Endothelial cell of umbilical vein (primary cell): ENCODE measurements at regions of chr12 and their contacts with region 1.

Region 1: DNA sequence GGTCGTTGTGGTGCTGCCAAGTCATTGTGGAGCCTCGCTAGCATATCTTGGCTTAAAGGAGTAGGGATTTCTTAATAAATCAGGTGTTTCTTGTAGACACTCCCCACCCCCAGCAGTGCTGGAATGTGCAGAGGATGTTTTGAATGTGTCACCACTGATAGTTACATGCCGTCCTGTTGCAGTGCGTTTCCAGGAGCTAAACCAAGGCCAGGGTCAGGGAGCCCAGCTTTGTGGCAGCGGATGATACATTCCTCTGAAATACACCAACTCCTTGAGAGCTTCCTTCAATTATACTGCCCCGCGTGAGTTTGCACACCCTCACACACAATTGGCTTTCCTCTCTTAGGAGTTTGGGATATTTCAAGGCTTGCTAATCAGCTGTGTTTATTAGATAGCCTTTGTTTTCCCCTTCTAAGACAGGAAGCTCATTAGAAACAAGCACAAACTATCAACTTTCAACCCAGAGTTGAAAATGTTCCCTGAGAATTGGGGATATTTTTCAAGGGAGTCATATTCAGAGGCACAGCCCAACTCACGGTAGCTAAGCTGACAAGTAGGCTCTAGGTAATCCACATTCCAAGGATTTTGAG is 154.9 kb downstream of the C12orf75 start:
- DNase-seq: peak; percentile 99
- H3K4me3 ChIP-seq: no peak overlapping the region
- H3K27ac ChIP-seq: peak overlapping the region; percentile 74
- H3K4me1 ChIP-seq: peaks cover 100% of the 10 kb centered on the region
- H3K27me3 ChIP-seq: no peaks in the 10 kb centered on the region
- CTCF ChIP-seq: no peak
- POLR2A ChIP-seq: peak; percentile 90

Region 2: GRCh38 chr12:105445249-105446015 is 40.0 kb before region 1 on chr12:
- CTCF ChIA-PET with region 1: interaction called, 14 read pairs
- POLR2A ChIA-PET with region 1: interaction called, 16 read pairs
- dilution Hi-C with region 1: no loop called
- intact Hi-C with region 1: loop called (anchors 1 kb)
- DNase-seq: peak; percentile 98
- H3K4me3 ChIP-seq: no peak overlapping the region
- H3K27ac ChIP-seq: peak overlapping the region; percentile 98
- H3K4me1 ChIP-seq: peaks cover 29% of the 10 kb centered on the region
- H3K27me3 ChIP-seq: no peaks in the 10 kb centered on the region
- CTCF ChIP-seq: no peak
- POLR2A ChIP-seq: peak; percentile 86

Region 3: DNA sequence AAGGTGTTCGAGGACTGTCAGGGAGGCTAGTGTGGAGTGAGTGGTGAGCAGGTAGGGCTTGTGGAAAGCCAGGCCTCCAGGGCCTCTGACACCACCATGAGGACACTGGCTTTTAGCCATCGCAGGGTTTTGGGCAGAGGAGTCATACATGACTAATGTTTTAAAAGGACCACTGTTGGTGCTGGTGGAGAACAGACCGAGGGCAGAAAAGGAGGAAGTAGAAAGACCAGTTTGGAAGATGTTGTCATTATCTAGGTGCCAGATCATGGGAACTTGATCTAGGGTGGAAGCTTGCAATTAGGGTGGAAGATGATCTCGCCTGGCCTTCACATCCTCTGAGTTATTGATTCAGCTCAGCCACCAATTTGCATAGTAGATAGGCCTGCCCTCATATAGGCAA is 10.7 kb before region 1 on chr12:
- CTCF ChIA-PET with region 1: interaction called, 41 read pairs
- POLR2A ChIA-PET with region 1: interaction called, 14 read pairs
- dilution Hi-C with region 1: no loop called
- intact Hi-C with region 1: loop called (anchors 1 kb)
- DNase-seq: peak; percentile 62
- H3K4me3 ChIP-seq: no peak overlapping the region
- H3K27ac ChIP-seq: peak overlapping the region; percentile 4
- H3K4me1 ChIP-seq: peaks cover 67% of the 10 kb centered on the region
- H3K27me3 ChIP-seq: no peaks in the 10 kb centered on the region
- CTCF ChIP-seq: no peak
- POLR2A ChIP-seq: no peak

Region 4: GRCh38 chr12:105587237-105587636 is 101.8 kb after region 1 on chr12:
- CTCF ChIA-PET with region 1: no interaction called
- POLR2A ChIA-PET with region 1: no interaction called
- dilution Hi-C with region 1: no loop called
- intact Hi-C with region 1: loop called (anchors 5 kb)
- DNase-seq: peak; percentile 94
- H3K4me3 ChIP-seq: no peak overlapping the region
- H3K27ac ChIP-seq: peak overlapping the region; percentile 51
- H3K4me1 ChIP-seq: peaks cover 29% of the 10 kb centered on the region
- H3K27me3 ChIP-seq: no peaks in the 10 kb centered on the region
- CTCF ChIP-seq: no peak
- POLR2A ChIP-seq: peak; percentile 59

Region 5: DNA sequence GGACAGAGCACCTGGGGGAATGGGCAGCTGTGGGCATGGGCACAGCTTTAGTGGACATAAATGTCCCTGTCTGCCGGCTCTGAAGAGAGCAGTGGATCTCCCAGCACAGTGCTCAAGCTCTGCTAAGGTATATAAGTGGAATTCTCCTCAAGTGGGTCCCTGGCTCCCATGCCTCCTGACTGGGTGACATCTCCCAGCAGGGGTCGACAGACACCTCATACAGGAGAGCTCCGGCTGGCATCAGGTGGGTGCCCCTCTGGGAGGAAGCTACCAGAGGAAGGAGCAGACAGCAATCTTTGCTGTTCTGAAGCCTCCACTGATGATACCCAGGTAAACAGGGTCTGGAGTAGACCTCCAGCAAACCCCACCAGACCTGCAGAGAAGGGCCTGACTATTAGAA is 678.3 kb after region 1 on chr12:
- CTCF ChIA-PET with region 1: no interaction called
- POLR2A ChIA-PET with region 1: no interaction called
- dilution Hi-C with region 1: no loop called
- intact Hi-C with region 1: no loop called
- DNase-seq: no peak
- H3K4me3 ChIP-seq: no peak overlapping the region
- H3K27ac ChIP-seq: no peak overlapping the region
- H3K4me1 ChIP-seq: no peaks in the 10 kb centered on the region
- H3K27me3 ChIP-seq: peaks cover 10 to 16% of the 10 kb centered on the region in 2 experiments
- CTCF ChIP-seq: no peak
- POLR2A ChIP-seq: no peak